GM18951 (cell line): ENCODE measurements at regions of chr1 and their contacts with region 1.

Region 1: GRCh38 chr1:225063722-225064121 is 134.2 kb downstream of the DNAH14 start:
- POLR2A ChIP-seq: no peak

Region 2: DNA sequence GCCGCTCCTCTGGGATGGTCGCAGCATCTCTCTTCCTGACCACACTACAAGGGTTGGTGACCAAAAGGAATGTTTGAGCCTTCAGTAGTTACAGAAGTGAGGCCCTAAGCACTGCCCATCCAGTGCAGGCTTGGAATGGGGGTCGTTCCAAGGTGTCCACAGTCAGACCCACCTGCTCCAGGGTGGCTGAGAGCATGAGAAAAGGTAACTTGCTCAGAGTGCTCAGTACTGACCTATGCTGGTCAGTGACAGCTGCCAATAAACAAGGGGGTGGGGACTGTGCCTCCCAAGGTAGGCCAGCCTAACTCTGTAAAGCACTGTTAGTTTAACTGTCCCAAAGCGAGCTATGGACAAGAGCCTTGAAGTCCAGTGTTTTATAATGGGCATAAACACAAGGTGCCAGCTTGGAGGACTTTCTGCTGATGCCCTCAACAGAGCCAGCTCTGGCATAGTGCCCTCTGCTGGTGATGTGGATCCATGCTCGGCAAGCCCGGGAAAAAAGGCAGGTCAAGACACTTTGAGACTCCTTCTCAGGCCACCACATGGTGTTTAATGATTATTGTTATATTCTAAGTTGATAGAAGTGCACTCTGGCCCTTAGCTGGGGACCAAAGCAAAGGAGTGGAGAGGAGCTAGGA is 212.4 kb before region 1 on chr1:
- in situ Hi-C with region 1: no loop called
- POLR2A ChIP-seq: no peak

Region 3: DNA sequence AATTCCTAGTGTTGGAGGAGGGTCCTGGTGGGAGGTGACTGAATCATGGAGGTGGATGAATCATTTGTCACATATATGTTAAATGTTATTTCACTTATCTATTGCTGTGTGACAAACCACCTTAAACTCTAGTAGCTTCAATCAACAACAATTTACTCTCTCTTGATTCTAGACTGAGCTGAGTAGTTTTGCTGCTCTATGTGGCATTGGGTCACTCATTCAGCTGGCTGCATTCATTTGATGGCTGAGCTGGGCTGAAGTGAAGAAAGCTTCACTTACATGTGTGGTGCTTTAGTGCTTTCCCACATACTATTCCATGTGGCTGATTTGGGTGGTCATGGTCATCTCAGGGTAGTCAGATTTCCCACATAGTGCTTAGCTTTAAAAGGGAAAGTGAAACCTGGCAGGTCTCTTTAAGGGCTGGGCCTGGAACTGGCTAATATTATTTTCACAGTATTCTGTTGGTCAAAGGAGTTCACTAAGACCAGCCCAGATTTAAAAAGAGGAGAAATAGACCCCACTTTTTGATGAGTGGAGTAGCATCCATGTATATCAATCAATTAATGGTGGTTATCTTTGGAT is 123.8 kb before region 1 on chr1:
- in situ Hi-C with region 1: loop called (anchors 5 kb)
- POLR2A ChIP-seq: no peak

Region 4: DNA sequence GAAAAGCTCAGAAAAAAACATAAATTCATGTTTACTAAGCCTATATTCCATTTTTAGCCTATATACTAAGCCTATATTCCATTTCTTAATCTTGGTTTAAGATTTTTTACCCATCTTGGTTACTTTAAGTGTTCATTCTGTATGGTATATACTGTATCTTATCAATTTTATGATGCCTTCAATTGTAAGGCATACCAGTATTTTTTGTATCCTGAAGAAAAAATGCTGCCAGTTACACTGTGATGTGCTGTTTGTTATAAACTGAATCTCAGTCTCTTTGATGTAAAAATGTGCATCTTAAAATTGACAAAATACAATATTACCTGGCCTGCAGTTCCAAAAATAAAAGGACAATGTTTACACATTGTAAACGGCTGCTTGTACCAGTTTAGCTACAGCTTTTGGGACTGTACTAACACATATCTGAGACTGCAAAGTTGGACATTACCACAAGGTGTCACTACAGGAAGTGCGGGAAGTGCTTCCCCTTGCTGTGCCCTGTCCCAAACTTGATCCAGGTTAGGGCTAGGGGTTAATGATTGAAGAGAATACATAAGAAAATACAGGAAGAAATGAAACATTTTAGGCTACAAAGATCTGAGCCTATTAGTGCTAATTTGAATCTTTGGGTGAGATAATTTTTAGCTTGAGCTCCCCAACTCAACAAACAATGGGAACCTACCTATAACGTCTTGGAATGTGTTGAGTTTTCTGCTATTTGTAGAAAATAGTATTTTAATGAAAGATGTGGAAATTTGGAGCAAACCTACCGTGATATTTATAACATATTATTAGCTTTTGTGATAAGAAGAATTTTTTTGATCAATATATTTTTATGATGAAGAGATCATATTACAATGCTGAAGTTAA is 255.2 kb after region 1 on chr1:
- in situ Hi-C with region 1: no loop called
- POLR2A ChIP-seq: no peak